ENCODE measurements at regions of chr1 and their contacts with region 1.

Region 1: DNA sequence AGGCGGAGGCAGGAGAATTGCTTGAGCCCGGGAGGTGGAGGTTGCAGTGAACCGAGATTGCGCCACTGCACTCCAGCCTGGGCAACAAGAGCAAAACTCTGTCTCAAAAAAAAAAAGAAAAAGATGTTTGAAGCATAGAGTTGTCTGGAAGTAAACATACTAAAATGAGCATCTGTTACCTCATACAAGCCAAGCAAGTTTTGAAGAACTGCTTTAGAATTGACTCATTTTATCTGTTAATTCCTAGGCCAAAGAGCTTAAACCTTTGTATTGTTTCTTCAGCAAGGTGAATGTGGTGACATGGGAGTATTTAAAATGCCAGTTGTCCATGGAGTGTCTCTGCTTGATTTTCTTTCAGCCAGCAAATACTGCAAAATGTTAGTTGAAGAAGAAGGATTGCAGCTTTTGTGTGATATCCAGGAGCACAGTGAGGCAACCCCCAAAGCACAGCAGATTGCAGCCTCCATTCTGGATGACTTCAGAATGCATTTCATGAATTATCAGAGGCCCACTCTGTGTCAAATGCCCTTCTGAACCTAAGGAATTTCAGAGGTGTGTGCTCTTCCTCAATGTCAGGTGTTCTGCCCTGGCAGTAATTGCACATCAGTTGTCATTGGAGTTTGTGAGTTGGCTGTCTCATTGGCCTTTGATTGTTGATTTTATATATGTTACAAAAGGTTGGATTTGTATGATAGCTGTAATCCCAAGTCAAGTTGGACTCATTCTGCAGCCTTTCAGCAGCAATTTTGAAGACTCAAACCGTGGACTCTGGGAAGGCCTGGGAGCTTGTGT is 28.9 kb downstream of the ECHDC2 start:
- DNase-seq: no peak
- ATAC-seq: no peak
- H3K4me3 ChIP-seq: no peak overlapping the region
- H3K27ac ChIP-seq: no peak overlapping the region
- H3K4me1 ChIP-seq: no peaks in the 10 kb centered on the region
- H3K27me3 ChIP-seq: no peaks in the 10 kb centered on the region
- CTCF ChIP-seq: no peak

Region 2: DNA sequence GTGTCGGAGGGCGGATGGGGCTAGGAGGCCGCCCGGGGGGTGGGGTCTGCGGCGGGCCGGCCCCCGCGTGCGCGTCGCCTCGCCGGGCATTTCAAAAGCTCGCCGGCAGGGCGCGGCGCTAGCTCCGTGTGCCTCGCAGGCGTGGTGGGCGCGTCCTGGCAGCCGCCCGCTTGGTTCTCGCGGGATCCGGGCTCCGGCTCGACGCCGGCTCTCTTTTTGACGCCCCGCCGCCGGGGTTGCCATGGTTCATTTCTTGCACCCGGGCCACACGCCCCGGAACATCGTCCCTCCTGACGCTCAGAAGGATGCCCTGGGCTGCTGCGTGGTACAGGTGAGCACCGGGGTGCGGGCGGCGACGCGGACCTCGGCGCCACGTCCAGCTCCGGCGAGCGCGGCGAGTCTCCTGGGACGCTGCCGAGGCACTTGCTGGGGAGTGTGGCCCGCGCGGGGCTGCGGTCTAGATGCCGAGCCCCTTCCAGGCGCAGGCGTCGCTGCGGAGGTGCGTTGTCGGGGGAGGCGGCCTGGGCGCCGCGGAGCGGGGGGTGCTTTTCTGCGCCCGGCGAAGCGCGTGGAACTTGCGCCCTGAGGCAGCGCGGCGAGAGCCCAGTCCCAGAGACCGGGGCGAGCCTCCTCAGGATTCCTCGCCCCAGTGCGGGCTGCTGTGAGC is 49.8 kb before region 1 on chr1 and contains the start of gene ZYG11A:
- CTCF ChIA-PET with region 1: interaction called, 17 read pairs
- POLR2A ChIA-PET with region 1: no interaction called
- in situ Hi-C with region 1: no loop called
- intact Hi-C with region 1: no loop called
- DNase-seq: no peak
- ATAC-seq: peak; percentile 96
- H3K4me3 ChIP-seq: peak within 1 kb of the TSS; percentile 31 to 45
- H3K27ac ChIP-seq: no peak within 1 kb of the TSS
- H3K4me1 ChIP-seq: no peaks in the 10 kb centered on the region
- H3K27me3 ChIP-seq: no peaks in the 10 kb centered on the region
- CTCF ChIP-seq: no peak
- total RNA-seq, gene ZYG11A: 0.36 TPM

Region 3: DNA sequence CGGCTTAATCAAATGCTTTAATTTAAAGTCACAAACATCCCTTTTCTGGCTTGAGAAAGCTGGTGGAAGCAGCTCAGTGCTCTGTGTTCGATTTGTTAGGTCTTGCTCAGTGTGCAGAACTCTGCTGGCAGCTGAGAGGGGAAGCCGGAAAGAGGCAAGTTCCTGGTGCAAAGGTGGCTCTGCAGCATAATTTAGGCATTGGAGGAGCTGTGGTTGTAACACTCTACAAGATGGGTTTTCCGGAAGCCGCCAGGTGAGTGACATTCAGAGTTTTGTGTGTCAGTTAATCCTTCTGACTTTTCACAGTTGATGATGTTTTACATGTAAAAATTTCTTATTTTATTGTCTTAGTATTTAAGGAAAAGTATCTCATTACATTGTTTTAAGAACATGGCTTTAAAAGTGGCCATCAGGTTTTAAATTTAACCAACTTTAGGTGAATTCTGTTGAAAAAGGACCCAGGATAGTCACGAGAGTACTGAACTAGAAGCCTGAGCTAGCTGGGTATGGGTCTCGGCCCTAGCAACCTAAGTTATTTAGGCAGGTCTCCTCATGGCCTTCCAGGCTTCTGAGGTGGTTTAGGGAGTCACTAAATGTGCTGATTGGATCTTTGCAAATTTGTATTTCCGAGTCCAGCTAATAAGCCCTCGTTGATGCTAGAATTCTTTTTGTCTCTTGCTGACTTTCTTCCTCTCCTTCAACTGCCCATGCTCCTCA is 122.3 kb after region 1 on chr1:
- CTCF ChIA-PET with region 1: no interaction called
- POLR2A ChIA-PET with region 1: no interaction called
- in situ Hi-C with region 1: no loop called
- intact Hi-C with region 1: no loop called
- DNase-seq: peak; percentile 71
- ATAC-seq: peak; percentile 96
- H3K4me3 ChIP-seq: peak overlapping the region; percentile 69 to 84
- H3K27ac ChIP-seq: peak overlapping the region; percentile 84
- H3K4me1 ChIP-seq: 0 out of 2 replicates have a peak, but pooled peaks cover 2% of the 10 kb centered on the region
- H3K27me3 ChIP-seq: no peaks in the 10 kb centered on the region
- CTCF ChIP-seq: no peak